Esophagus squamous epithelium (tissue), 5 donors: ENCODE measurements at regions of chr11 and their contacts with region 1.

Region 1: DNA sequence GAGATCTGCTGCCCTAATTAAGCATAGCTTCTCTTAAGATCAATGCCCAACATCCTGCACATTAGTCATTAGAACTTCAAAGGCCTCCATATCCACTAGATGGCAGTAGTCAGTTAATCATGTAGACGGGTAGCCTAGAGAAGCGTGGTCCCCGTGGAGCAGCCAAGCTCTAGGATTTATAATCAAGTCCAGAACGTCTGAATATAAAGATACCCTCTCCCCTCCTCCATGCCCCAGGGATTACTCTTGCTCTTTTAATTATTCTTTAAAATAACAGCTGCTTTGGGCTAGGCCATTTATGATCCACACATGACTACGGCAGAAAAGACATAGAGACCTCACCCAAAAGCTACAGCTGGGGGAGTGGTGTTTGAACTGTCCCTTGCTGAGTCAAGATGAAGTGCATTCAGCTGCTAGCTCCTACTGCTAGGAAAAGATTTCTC is 327.6 kb upstream of the PLET1 start:
- DNase-seq: peak; percentile 2
- H3K4me3 ChIP-seq: no peak overlapping the region
- H3K27ac ChIP-seq: no peak overlapping the region
- H3K4me1 ChIP-seq: peaks cover 0 to 5% (median 3%) of the 10 kb centered on the region in 3 donors
- H3K27me3 ChIP-seq: no peaks in the 10 kb centered on the region
- CTCF ChIP-seq: peak; percentile 42 to 85 (median 74)
- POLR2A ChIP-seq: no peak

Region 2: GRCh38 chr11:112644410-112645131 is 56.3 kb after region 1 on chr11:
- intact Hi-C with region 1: no loop called
- DNase-seq: no peak
- H3K4me3 ChIP-seq: no peak overlapping the region
- H3K27ac ChIP-seq: no peak overlapping the region
- H3K4me1 ChIP-seq: no peaks in the 10 kb centered on the region
- H3K27me3 ChIP-seq: no peaks in the 10 kb centered on the region
- CTCF ChIP-seq: no peak
- POLR2A ChIP-seq: no peak

Region 3: GRCh38 chr11:112784323-112785073 is 196.2 kb after region 1 on chr11:
- intact Hi-C with region 1: loop called (anchors 10 kb)
- DNase-seq: no peak
- H3K4me3 ChIP-seq: peak overlapping the region in 1 of 4 donors; percentile 4
- H3K27ac ChIP-seq: peak overlapping the region in 2 of 4 donors; percentile 22 to 34
- H3K4me1 ChIP-seq: peaks cover 0 to 22% (median 13%) of the 10 kb centered on the region in 3 donors
- H3K27me3 ChIP-seq: peaks cover 0 to 36% (median 0%) of the 10 kb centered on the region in 4 donors
- CTCF ChIP-seq: no peak
- POLR2A ChIP-seq: no peak

Region 4: DNA sequence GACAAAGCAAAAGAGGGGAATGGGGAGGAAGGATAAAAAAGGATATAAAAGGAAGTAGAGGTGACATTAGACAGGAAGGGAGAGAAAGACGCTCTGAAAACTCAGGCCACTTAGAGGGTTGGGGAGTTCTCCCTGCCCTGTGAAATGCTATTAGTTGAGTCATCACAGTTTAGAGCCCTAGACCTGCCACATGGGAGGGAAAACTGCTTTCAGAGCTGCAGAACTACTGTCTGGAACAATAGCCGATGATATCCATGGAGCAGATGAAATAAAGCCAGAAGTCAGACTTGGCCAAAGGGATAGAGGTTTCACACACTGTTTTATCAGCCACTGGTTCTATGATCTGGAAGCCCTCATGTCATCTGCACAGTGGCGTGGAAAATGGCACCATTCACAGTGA is 530.8 kb after region 1 on chr11:
- intact Hi-C with region 1: loop called (anchors 5 kb)
- DNase-seq: no peak
- H3K4me3 ChIP-seq: no peak overlapping the region
- H3K27ac ChIP-seq: no peak overlapping the region
- H3K4me1 ChIP-seq: peaks cover 0 to 5% (median 0%) of the 10 kb centered on the region in 3 donors
- H3K27me3 ChIP-seq: peaks cover 0 to 5% (median 0%) of the 10 kb centered on the region in 4 donors
- CTCF ChIP-seq: no peak
- POLR2A ChIP-seq: no peak

Region 5: GRCh38 chr11:113289431-113290187 is 701.3 kb after region 1 on chr11:
- intact Hi-C with region 1: loop called (anchors 10 kb)
- DNase-seq: no peak
- H3K4me3 ChIP-seq: no peak overlapping the region
- H3K27ac ChIP-seq: no peak overlapping the region
- H3K4me1 ChIP-seq: no peaks in the 10 kb centered on the region
- H3K27me3 ChIP-seq: peaks cover 0 to 21% (median 0%) of the 10 kb centered on the region in 4 donors
- CTCF ChIP-seq: peak; percentile 59 to 91 (median 76)
- POLR2A ChIP-seq: no peak